IMR-90 (cell line): ENCODE measurements at regions of chr6 and their contacts with region 1.

Region 1: GRCh38 chr6:7107578-7108195 is at the start of gene RREB1:
- DNase-seq: peak; percentile 54
- ATAC-seq: peak; percentile 46
- H3K4me3 ChIP-seq: peak within 1 kb of the TSS; percentile 96
- H3K27ac ChIP-seq: peak within 1 kb of the TSS; percentile 99
- H3K4me1 ChIP-seq: peaks cover 7% of the 10 kb centered on the region
- H3K27me3 ChIP-seq: no peaks in the 10 kb centered on the region
- CTCF ChIP-seq: no peak
- POLR2A ChIP-seq: no peak
- RAD21 ChIP-seq: no peak
- total RNA-seq, gene RREB1: 8.4 and 8.6 TPM in 2 replicates

Region 2: GRCh38 chr6:6676910-6677441 is 430.7 kb before region 1 on chr6:
- CTCF ChIA-PET with region 1: no interaction called
- POLR2A ChIA-PET with region 1: no interaction called
- dilution Hi-C with region 1: no loop called
- in situ Hi-C with region 1: no loop called
- intact Hi-C with region 1: loop called (anchors 1 kb)
- DNase-seq: peak; percentile 69
- ATAC-seq: peak; percentile 98
- H3K4me3 ChIP-seq: no peak overlapping the region
- H3K27ac ChIP-seq: no peak overlapping the region
- H3K4me1 ChIP-seq: peaks cover 2% of the 10 kb centered on the region; the same call in 1 of the 2 replicates
- H3K27me3 ChIP-seq: no peaks in the 10 kb centered on the region; the same call in 1 of the 2 replicates
- CTCF ChIP-seq: peak; percentile 90
- POLR2A ChIP-seq: no peak
- RAD21 ChIP-seq: peak; percentile 88

Region 3: GRCh38 chr6:6758915-6759654 is 348.6 kb before region 1 on chr6:
- CTCF ChIA-PET with region 1: no interaction called
- POLR2A ChIA-PET with region 1: no interaction called
- dilution Hi-C with region 1: no loop called
- in situ Hi-C with region 1: no loop called
- intact Hi-C with region 1: loop called (anchors 10 kb)
- DNase-seq: peak; percentile 61
- ATAC-seq: peak; percentile 96
- H3K4me3 ChIP-seq: no peak overlapping the region
- H3K27ac ChIP-seq: no peak overlapping the region
- H3K4me1 ChIP-seq: peaks cover 2% of the 10 kb centered on the region; the same call in 1 of the 2 replicates
- H3K27me3 ChIP-seq: no peaks in the 10 kb centered on the region
- CTCF ChIP-seq: peak; percentile 51
- POLR2A ChIP-seq: no peak
- RAD21 ChIP-seq: peak; percentile 58

Region 4: DNA sequence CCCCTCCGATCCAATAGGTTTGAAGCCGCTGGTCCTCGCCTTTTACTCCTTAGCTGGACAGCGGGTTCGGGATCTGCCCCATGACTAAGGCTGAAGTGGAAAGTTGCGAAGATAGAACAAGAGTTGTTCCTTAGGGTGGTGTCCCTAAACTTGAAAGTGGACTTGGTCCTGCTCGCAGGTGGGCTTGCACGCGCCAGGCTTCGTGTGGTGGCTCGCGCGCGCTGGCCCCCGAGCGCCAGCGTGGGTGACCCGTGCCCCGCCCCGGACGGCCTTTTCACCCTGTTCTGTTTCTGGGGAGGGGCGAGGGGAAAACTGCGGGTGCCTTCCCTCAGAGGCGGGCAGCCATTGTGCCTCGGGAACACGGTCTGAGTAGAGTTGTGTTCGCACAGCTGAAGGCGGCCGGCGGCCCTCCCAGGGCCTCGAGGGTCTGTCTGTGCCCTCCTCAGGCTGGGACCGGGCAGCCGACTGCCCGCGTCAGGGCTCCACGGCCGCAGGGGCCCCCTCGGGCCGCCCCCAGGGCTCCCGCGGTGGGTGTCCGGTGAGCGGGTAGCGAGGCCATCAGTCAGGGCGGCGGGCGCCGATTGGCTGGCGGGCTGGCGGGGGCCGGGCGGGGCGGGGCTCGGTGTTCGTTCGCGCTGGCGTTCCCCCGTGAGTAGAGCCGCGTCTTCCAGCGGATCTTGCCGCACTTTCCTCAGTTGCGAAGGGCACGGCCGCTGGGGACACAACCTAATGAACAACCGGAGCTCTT is 33.1 kb after region 1 on chr6:
- CTCF ChIA-PET with region 1: no interaction called
- POLR2A ChIA-PET with region 1: no interaction called
- dilution Hi-C with region 1: no loop called
- in situ Hi-C with region 1: no loop called
- intact Hi-C with region 1: loop called (anchors 2 kb)
- DNase-seq: peak; percentile 66
- ATAC-seq: peak; percentile 90
- H3K4me3 ChIP-seq: peak overlapping the region; percentile 69
- H3K27ac ChIP-seq: peak overlapping the region; percentile 97
- H3K4me1 ChIP-seq: peaks cover 24% of the 10 kb centered on the region
- H3K27me3 ChIP-seq: no peaks in the 10 kb centered on the region
- CTCF ChIP-seq: 0 out of 2 replicates have a peak, but pooled peaks have one; percentile 5
- POLR2A ChIP-seq: peak; percentile 80
- RAD21 ChIP-seq: no peak

Region 5: GRCh38 chr6:7219310-7219709 is 111.6 kb after region 1 on chr6:
- CTCF ChIA-PET with region 1: interaction called, 4 read pairs
- POLR2A ChIA-PET with region 1: no interaction called
- dilution Hi-C with region 1: no loop called
- in situ Hi-C with region 1: no loop called
- intact Hi-C with region 1: loop called (anchors 5 kb)
- DNase-seq: peak; percentile 52
- ATAC-seq: peak; percentile 24; the same call in 1 of the 2 replicates
- H3K4me3 ChIP-seq: no peak overlapping the region
- H3K27ac ChIP-seq: no peak overlapping the region
- H3K4me1 ChIP-seq: peaks cover 24% of the 10 kb centered on the region
- H3K27me3 ChIP-seq: no peaks in the 10 kb centered on the region
- CTCF ChIP-seq: no peak
- POLR2A ChIP-seq: no peak
- RAD21 ChIP-seq: no peak